ENCODE measurements at regions of chr7 and their contacts with region 1.

Region 1: GRCh38 chr7:128343554-128344430 is at the start of gene RBM28:
- DNase-seq: peak; percentile 90

Region 2: GRCh38 chr7:127745445-127745844 is 598.3 kb before region 1 on chr7:
- CTCF ChIA-PET with region 1: no interaction called
- POLR2A ChIA-PET with region 1: no interaction called
- DNase-seq: no peak

Region 3: GRCh38 chr7:128381161-128381821 is 37.5 kb after region 1 on chr7:
- CTCF ChIA-PET with region 1: interaction called, 122 read pairs
- POLR2A ChIA-PET with region 1: interaction called, 9 read pairs
- DNase-seq: peak; percentile 81

Region 4: DNA sequence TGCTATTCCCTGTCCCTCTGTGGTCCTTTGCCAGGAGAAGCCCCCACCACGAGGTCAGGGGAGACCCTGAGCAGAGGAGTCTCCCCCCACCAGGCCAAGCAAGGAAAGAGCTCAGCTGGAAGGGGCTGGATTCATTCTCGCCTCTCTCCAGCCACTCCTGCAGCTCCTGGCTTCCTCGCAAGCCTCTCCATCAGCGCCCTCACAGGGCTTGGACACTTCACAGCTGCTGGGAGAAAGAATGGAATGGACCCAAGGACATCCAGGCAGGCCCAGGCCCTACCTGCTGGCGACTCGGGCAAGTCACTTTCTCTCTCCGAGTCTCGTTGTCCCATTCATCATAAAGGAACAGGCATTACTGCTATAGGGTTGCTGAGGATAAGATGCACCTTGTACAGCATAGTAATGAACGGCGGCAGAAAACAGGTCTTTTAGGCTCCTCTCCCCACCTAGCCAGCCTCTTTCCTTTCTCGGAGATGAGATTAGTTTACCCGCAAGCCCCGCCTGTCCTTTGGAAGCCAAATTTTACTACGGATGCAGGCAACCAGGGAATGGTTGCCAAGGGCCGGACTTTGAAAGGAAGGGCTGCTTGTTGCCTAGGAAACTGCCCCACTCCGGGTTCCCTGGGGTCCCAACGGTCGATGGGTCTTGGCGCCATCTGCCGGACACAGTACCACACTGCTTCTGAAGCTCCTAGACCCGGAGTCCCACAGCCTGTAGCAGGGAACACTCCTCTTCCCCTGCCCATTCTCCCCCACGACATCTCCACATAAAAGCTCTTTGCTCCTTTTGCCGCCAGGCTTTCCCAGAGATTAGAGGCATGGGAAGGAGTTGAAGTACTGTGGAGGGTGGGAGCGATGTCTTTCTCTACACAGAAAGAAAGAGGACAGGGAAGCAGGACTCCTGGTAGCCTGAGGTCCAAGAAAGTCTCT is 43.7 kb after region 1 on chr7:
- CTCF ChIA-PET with region 1: interaction called, 122 read pairs
- POLR2A ChIA-PET with region 1: interaction called, 9 read pairs
- DNase-seq: peak; percentile 93

Region 5: DNA sequence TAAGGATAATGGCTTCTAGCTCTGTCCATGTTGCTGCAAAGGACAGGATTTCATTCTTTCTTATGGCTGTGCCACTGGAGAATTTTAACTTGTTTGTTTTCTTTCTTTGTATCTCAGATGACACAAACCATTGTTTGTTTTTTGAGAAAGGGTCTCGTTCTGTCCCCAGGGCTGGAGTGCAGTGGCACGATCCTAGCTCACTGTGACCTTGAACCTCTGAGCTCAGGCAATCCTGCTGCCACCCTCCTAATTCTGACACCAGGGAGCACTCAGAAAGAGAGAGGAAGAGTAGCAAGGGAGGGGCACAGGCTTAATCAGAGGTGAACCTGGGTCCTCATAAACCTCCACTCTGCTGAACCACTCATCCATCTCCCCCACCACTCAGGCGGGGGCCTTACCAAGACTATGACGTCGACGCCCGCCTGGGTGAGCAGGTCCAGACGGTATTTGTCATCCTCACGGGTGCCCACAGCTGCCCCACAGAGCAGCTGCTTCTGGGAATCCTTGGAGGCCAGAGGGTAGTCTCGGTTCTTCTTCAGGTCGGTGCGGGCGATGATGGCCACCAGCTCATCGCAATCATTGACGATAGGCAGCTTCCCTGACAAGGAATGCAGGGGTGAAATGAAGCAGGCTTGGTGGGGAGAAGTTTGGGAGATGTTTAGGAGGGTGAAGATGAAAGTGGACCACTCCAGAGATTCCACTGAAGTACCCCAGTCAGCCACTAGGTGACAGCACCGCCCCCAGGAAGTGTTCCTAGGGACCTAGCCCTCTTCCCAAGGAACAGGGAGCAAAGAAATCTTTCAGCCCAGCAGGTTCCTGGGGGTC is 54.4 kb after region 1 on chr7:
- CTCF ChIA-PET with region 1: interaction called, 11 read pairs
- POLR2A ChIA-PET with region 1: interaction called, 3 read pairs
- DNase-seq: peak; percentile 70

Region 6: GRCh38 chr7:128409596-128410160 is 65.9 kb after region 1 on chr7 and contains the start of gene IMPDH1:
- CTCF ChIA-PET with region 1: interaction called, 7 read pairs
- POLR2A ChIA-PET with region 1: interaction called, 13 read pairs
- DNase-seq: peak; percentile 91

Region 7: DNA sequence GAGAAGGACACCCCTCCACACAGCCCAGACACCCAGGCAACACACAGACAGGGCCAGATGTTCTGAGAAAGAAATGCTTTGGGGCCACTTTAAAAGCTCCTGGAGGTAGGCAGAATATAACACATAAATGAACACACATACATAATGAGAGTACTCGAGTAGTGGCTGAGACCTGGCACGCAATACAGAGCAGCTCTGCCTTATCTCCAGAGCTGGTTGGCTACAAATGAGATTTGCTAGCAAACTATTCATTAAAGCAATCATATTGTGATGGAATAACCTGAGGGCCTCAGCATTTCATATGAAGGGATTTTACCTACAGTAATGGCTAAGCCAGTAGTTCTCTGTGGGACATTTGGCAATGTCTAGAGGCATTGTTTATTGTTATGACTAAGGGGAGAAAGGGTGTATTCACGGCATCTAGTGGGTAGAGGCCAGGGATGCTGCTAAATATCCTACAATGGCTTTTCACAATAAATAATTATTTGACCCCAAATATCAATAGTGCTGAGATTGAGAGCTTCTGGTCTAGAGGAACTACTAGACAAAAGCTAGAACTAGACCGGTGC is 71.5 kb after region 1 on chr7:
- CTCF ChIA-PET with region 1: interaction called, 10 read pairs
- POLR2A ChIA-PET with region 1: interaction called, 13 read pairs
- DNase-seq: no peak

Region 8: DNA sequence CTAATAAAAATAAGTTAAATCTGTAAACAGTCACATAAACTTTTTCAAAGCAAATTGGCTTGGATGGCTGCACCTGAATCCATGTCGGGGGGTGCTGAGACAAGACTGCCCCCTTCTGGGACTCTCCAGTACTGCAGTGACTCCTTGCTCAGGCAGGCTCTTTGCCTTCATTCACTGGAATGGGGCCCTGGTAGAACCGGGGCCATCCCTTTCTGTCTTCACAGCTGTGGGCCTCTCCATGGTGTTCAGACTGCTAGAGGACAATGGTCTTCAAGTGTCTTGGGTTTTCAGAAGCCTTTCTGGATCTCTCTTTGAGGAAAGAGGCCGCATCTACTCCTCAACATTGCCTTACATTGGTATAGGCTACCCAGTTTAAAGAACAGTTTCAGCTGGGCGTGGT is 82.1 kb after region 1 on chr7:
- CTCF ChIA-PET with region 1: interaction called, 24 read pairs
- POLR2A ChIA-PET with region 1: interaction called, 4 read pairs
- DNase-seq: peak; percentile 80